Activated B cell treated with CpG ODN at 0.5 μM for 24 hours (primary cell): ENCODE measurements at regions of chr19 and their contacts with region 1.

Region 1: GRCh38 chr19:17932485-17933338 is at the start of gene CCDC124:
- DNase-seq: peak; percentile 87
- ATAC-seq: peak; percentile 96
- H3K4me3 Mint-ChIP-seq: peak within 1 kb of the TSS; percentile 88
- H3K27ac Mint-ChIP-seq: peak within 1 kb of the TSS; percentile 94
- H3K4me1 Mint-ChIP-seq: peaks cover 25% of the 10 kb centered on the region
- H3K27me3 Mint-ChIP-seq: no peaks in the 10 kb centered on the region
- CTCF ChIP-seq: no peak
- total RNA-seq, gene CCDC124: 49.9 and 59.5 TPM in 2 replicates

Region 2: GRCh38 chr19:17605761-17606745 is 326.7 kb before region 1 on chr19:
- CTCF ChIA-PET with region 1: no interaction called
- POLR2A ChIA-PET with region 1: interaction called, 8 read pairs
- intact Hi-C with region 1: loop called (anchors 2 kb)
- DNase-seq: peak; percentile 80
- ATAC-seq: peak; percentile 92
- H3K4me3 Mint-ChIP-seq: peak overlapping the region; percentile 83
- H3K27ac Mint-ChIP-seq: peak overlapping the region; percentile 69
- H3K4me1 Mint-ChIP-seq: peaks cover 15% of the 10 kb centered on the region
- H3K27me3 Mint-ChIP-seq: peaks cover 30% of the 10 kb centered on the region
- CTCF ChIP-seq: no peak

Region 3: GRCh38 chr19:17847538-17848366 is 85.0 kb before region 1 on chr19 and contains the start of gene JAK3:
- CTCF ChIA-PET with region 1: interaction called, 4 read pairs
- POLR2A ChIA-PET with region 1: interaction called, 47 read pairs
- intact Hi-C with region 1: no loop called
- DNase-seq: peak; percentile 79
- ATAC-seq: peak; percentile 86
- H3K4me3 Mint-ChIP-seq: peak within 1 kb of the TSS; percentile 94
- H3K27ac Mint-ChIP-seq: peak within 1 kb of the TSS; percentile 96
- H3K4me1 Mint-ChIP-seq: peaks cover 73% of the 10 kb centered on the region
- H3K27me3 Mint-ChIP-seq: no peaks in the 10 kb centered on the region
- CTCF ChIP-seq: no peak
- total RNA-seq, gene JAK3: 213 and 256 TPM in 2 replicates

Region 4: GRCh38 chr19:17873786-17874757 is 58.6 kb before region 1 on chr19:
- CTCF ChIA-PET with region 1: interaction called, 24 read pairs
- POLR2A ChIA-PET with region 1: interaction called, 16 read pairs
- intact Hi-C with region 1: loop called (anchors 1 kb)
- DNase-seq: peak; percentile 50
- ATAC-seq: peak; percentile 90
- H3K4me3 Mint-ChIP-seq: peak overlapping the region; percentile 59
- H3K27ac Mint-ChIP-seq: no peak overlapping the region
- H3K4me1 Mint-ChIP-seq: peaks cover 21% of the 10 kb centered on the region
- H3K27me3 Mint-ChIP-seq: peaks cover 2% of the 10 kb centered on the region
- CTCF ChIP-seq: no peak